ENCODE measurements at regions of chr11 and their contacts with region 1.

Region 1: DNA sequence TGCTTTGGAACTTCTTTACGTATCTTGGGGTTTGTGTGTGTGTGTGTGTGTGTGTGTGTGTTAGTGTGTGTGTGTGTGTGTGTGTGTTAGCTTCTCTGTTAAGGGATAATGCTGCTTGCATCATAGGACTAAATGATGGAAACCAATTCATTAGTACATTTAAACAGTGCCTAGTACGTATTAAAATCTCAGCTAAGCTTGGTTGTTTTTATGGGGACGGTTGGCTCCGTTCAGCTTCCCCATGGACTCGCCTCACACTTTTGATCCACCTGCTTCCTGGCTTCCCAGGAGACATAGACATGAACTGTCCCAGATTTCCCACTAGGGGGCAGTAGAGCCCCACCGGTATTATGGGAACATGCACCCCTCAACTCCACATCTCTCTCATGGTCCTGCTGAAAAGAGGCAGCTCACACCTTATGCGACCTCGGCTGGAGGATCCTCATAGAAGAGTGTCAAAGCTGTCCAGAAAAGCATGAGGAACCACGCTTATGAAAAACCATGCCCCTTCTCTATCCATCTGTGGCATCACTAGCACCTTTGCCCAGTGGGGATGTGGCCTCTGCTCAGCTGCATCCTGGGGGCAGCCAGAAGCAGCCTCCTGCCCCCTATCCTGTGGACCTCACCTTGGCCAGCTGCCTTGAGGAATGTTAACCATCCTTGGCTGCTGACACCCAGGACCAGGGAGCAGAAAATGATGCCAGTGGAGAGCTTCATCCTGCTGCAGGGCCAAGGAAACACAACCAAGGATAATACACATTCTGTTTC is 9.7 kb upstream of the SAAL1 start:
- DNase-seq: peak; percentile 63 to 64
- H3K4me3 ChIP-seq: no peak overlapping the region
- H3K27ac ChIP-seq: no peak overlapping the region
- H3K4me1 ChIP-seq: no peaks in the 10 kb centered on the region
- H3K27me3 ChIP-seq: peaks cover 30% of the 10 kb centered on the region
- CTCF ChIP-seq: peak; percentile 97

Region 2: DNA sequence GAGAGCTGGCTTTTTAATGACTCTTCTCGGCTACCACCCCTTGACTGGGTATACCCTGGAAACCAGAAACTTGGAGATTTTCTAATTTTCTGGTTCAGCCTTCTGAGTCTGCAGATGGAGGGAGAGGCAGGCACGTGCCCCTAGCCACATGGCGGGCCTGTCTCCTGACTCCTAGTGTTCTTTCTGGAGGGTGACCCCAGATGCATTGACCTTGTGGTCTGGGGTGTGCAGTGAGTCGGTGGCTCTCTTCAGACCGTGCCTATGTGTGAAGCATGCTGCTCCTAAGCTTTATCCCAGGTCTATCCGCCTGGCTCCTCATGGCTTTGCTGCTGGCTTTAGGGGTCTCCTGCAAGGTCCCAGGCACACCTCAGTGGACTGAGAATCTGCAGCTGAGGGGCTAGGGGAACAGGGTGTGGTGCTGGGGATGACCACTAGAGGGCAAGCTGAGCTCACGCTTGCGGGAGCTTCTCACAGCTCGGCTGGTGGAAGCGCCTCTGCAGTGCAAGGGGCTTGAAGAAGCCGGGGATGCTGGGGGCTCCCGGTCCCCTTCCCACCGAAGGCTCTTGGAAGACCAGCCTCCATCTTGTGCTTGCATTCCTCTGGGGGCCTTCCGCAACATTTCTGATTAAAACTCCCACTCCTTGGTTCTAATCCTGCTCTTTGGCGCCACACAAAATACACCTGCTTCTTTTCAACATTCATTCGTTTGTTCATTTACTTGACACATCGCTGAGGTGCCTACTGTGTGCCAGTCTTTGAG is 516.7 kb before region 1 on chr11:
- CTCF ChIA-PET with region 1: interaction called, 11 read pairs
- POLR2A ChIA-PET with region 1: no interaction called
- intact Hi-C with region 1: loop called (anchors 10 kb)
- DNase-seq: peak in 1 of 2 experiments; percentile 60
- H3K4me3 ChIP-seq: no peak overlapping the region
- H3K27ac ChIP-seq: no peak overlapping the region
- H3K4me1 ChIP-seq: no peaks in the 10 kb centered on the region
- H3K27me3 ChIP-seq: peaks cover 40% of the 10 kb centered on the region
- CTCF ChIP-seq: peak; percentile 96

Region 3: GRCh38 chr11:18761741-18762140 is 646.2 kb after region 1 on chr11:
- CTCF ChIA-PET with region 1: interaction called, 3 read pairs
- POLR2A ChIA-PET with region 1: no interaction called
- intact Hi-C with region 1: loop called (anchors 5 kb)
- DNase-seq: no peak
- H3K4me3 ChIP-seq: no peak overlapping the region
- H3K27ac ChIP-seq: no peak overlapping the region
- H3K4me1 ChIP-seq: peaks cover 8% of the 10 kb centered on the region
- H3K27me3 ChIP-seq: 0 out of 2 replicates have a peak, but pooled peaks cover 7% of the 10 kb centered on the region
- CTCF ChIP-seq: no peak

Region 4: DNA sequence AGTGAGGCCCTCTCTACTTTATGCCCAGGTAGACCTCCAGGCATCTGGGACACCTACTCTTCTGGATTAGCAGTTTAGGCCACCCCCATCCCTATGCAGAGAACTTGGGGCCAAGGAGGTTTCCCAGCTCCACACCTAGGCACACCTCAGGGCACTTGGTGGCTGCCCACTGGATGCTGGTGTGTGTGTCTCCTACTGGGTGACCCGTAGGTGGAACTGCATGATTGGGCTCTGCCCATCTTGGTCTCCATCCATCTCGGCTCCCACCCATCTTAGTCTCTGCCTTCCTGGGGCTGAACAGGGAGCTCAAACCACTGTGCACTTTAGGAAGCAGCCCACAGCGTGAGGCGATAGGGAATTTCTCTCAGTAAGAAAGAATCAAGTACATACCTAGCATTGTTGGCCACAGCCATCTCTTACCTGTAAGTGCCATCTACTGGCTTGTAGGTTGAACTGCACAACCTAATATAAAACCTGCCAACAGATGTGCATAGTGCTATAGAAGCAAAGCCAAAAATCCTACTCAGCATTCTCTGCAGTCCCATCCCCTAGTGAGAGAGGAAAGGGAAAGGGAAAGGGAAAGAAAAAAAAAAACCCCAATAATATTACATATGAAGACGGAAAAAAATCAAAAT is 737.7 kb after region 1 on chr11:
- CTCF ChIA-PET with region 1: no interaction called
- POLR2A ChIA-PET with region 1: no interaction called
- intact Hi-C with region 1: loop called (anchors 2 kb)
- DNase-seq: peak in 1 of 2 experiments; percentile 62
- H3K4me3 ChIP-seq: no peak overlapping the region
- H3K27ac ChIP-seq: no peak overlapping the region
- H3K4me1 ChIP-seq: no peaks in the 10 kb centered on the region
- H3K27me3 ChIP-seq: peaks cover 32% of the 10 kb centered on the region
- CTCF ChIP-seq: peak; percentile 88

Measured in PC-9 (cell line).